Activated CD8-positive, alpha-beta T cell treated with anti-CD3 and anti-CD28 coated beads, Interleukin-2, amount 10 ng/mL, durations not matched to agents 7 days and 5 days (primary cell): ENCODE measurements at regions of chr1 and their contacts with region 1.

Region 1: GRCh38 chr1:44730741-44731512 is at the start of gene RNU5D-1:
- DNase-seq: peak; percentile 97
- ATAC-seq: peak; percentile 82
- H3K4me3 Mint-ChIP-seq: peak within 1 kb of the TSS; percentile 64
- H3K27ac Mint-ChIP-seq: peak within 1 kb of the TSS; percentile 99
- H3K4me1 Mint-ChIP-seq: peaks cover 45% of the 10 kb centered on the region
- H3K27me3 Mint-ChIP-seq: no peaks in the 10 kb centered on the region
- total RNA-seq, gene RNU5D-1: not detected

Region 2: DNA sequence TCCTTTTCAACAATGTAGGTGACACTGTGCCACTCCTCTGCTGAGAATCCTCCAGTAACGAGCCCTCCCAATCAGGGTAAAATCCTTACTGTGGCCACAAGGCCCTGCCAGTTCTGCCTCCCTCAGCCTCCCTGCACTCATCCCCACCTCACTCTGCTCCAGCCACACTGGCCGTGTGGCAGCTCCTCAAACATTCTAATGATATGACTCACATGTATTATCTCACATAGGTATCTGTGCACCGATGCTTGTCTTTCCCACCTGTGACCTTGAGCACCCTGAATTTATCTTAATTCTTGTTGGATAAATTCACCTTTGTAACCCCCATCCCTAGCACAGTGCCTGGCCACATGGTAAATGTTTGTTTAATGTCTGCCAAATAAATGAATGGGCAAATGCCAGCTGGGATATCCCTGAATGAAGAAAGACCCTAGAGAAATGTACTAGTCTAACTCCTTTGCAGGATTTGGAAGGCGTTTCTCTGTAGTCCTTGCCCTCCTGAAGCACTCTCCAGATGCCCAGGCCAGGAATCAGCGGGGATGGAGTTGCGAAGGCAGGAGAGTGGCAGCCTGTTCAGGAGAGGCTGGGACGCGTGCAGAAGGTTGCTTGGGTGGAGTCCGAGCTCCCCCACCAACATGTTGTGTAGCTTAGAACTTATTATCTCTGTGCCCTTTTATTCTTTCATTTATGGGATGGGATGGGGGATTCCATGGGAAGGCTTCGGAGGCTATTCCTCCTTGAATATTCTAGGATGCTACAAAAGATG is 162.6 kb before region 1 on chr1:
- CTCF ChIA-PET with region 1: no interaction called
- POLR2A ChIA-PET with region 1: no interaction called
- DNase-seq: no peak
- ATAC-seq: no peak
- H3K4me3 Mint-ChIP-seq: no peak overlapping the region
- H3K27ac Mint-ChIP-seq: no peak overlapping the region
- H3K4me1 Mint-ChIP-seq: no peaks in the 10 kb centered on the region
- H3K27me3 Mint-ChIP-seq: peaks cover 13% of the 10 kb centered on the region

Region 3: GRCh38 chr1:44674113-44675000 is 56.6 kb before region 1 on chr1 and contains the starts of genes ARMH1 and TMEM53:
- CTCF ChIA-PET with region 1: no interaction called
- POLR2A ChIA-PET with region 1: interaction called, 27 read pairs
- DNase-seq: peak; percentile 99
- ATAC-seq: peak; percentile 97
- H3K4me3 Mint-ChIP-seq: peak within 1 kb of the TSS; percentile 83
- H3K27ac Mint-ChIP-seq: peak within 1 kb of the TSS; percentile 87
- H3K4me1 Mint-ChIP-seq: peaks cover 28% of the 10 kb centered on the region
- H3K27me3 Mint-ChIP-seq: no peaks in the 10 kb centered on the region
- total RNA-seq, gene ARMH1: 80.0 to 88.4 TPM
- total RNA-seq, gene TMEM53: 4.0 to 4.6 TPM

Region 4: GRCh38 chr1:44747878-44748277 is 17.0 kb after region 1 on chr1:
- CTCF ChIA-PET with region 1: interaction called, 61 read pairs
- POLR2A ChIA-PET with region 1: interaction called, 102 read pairs
- DNase-seq: no peak
- ATAC-seq: no peak
- H3K4me3 Mint-ChIP-seq: no peak overlapping the region
- H3K27ac Mint-ChIP-seq: no peak overlapping the region
- H3K4me1 Mint-ChIP-seq: peaks cover 32% of the 10 kb centered on the region
- H3K27me3 Mint-ChIP-seq: no peaks in the 10 kb centered on the region

Region 5: DNA sequence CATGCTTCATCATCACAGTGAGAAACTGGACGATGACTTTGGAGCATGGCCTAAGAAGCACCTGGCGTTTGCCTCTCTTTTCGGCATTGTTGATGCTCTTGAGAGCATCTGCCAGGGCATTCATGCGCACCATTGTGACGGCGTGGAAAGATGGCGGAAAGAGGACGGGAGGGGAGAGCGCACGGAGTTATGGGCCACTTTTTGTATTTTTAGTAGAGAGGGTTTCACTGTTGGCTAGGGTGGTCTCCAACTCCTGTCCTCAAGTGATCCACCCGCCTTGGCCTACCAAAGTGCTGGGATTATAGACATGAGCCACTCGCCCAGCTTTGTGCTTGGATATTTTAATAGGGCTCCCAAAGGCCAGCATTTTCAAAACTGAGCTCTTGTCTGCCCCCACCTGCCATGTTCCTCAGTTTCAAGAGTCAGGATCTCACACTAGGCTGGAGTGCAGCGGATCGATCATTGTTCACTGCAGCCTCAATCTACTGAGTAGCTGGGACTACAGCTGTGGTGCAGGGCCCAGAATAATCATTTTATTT is 49.7 kb after region 1 on chr1:
- CTCF ChIA-PET with region 1: interaction called, 20 read pairs
- POLR2A ChIA-PET with region 1: interaction called, 113 read pairs
- DNase-seq: no peak
- ATAC-seq: no peak
- H3K4me3 Mint-ChIP-seq: no peak overlapping the region
- H3K27ac Mint-ChIP-seq: peak overlapping the region; percentile 43
- H3K4me1 Mint-ChIP-seq: peaks cover 56% of the 10 kb centered on the region
- H3K27me3 Mint-ChIP-seq: no peaks in the 10 kb centered on the region

Region 6: GRCh38 chr1:44799770-44800584 is 69.0 kb after region 1 on chr1 and contains the start of gene PLK3:
- CTCF ChIA-PET with region 1: interaction called, 4 read pairs
- POLR2A ChIA-PET with region 1: interaction called, 41 read pairs
- DNase-seq: peak; percentile 99
- ATAC-seq: peak; percentile 77
- H3K4me3 Mint-ChIP-seq: peak within 1 kb of the TSS; percentile 96
- H3K27ac Mint-ChIP-seq: peak within 1 kb of the TSS; percentile 100
- H3K4me1 Mint-ChIP-seq: peaks cover 42% of the 10 kb centered on the region
- H3K27me3 Mint-ChIP-seq: no peaks in the 10 kb centered on the region
- total RNA-seq, gene PLK3: 64.8 to 68.0 TPM

Region 7: DNA sequence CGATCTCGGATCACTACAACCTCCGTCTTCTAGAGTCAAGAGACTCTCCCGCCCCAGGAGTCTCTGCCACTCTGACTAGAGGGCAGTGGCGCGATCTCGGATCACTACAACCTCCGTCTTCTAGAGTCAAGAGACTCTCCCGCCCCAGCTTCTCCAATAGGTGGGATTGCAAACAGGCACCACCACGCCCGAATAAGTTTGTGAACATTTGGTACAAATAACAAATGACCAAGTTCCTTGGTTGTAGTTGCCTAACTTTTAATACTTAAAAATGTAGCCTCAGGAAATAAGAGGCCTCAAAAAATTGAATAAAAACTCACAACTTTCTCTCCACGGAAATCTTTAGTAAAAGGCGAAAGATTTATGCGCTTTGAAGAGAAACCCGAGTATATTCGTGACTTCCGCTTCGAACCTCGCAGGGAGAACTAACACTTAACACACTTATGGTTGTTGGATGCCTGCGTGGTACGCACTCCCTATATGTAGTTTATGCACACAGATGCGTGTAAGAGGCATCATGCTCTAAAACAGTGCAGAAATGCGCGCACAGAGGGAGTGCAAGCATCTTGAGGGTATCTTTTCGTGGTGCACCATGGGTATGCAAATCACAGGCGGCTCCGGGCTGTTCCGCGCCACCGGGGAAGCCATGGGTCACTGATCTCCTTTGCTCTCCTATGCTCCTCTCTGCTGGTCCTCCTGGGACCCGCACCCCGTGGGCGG is 88.8 kb after region 1 on chr1:
- CTCF ChIA-PET with region 1: interaction called, 5 read pairs
- POLR2A ChIA-PET with region 1: interaction called, 564 read pairs
- DNase-seq: peak; percentile 92
- ATAC-seq: peak; percentile 92
- H3K4me3 Mint-ChIP-seq: peak overlapping the region; percentile 92
- H3K27ac Mint-ChIP-seq: peak overlapping the region; percentile 100
- H3K4me1 Mint-ChIP-seq: peaks cover 51% of the 10 kb centered on the region
- H3K27me3 Mint-ChIP-seq: no peaks in the 10 kb centered on the region